Activated CD4-positive, alpha-beta T cell treated with anti-CD3 and anti-CD28 coated beads for 36 hours (primary cell): ENCODE measurements at regions of chr22 and their contacts with region 1.

Region 1: DNA sequence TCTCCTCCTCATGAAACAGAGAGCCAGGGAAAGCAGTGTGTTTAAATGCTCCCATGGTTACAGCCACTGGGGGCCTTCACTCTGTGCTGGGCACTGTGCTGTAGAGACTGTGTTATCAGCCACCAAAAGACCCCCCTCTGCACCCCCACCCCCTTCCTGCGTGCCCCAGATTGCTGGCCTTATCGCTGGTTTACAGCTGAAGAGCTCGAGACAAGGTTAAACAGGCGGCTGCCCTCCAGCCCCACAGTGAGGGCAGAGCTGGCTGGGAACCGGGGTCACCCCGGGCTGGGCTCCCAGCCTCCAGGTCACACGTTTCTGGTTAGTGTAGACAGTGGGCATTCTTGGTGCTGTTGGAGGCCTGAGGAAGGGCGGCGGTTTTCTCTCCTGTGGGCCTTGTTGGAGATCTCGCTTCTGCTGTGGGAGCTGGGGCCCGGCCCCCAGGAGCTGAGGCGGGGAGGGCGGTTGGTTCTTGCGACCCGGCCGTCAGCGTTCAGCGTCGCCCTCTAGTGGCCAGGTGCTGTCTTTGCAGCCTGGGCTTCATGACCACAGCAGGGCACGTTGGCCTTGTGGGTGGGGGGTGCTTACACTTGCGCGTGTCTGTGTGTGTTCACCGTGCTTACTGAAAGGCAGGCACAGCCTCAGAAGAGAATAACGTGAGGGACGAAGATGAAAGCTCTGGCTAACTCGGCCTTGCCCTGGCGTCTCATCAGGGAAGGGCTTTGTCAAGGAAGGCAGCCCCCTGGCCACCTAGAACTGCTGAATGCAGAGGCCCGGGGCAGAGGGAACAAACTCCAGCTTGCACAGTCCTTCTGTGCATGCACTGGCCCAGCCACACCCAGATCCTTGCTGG is 40.8 kb downstream of the TBC1D22A start:
- DNase-seq: peak; percentile 84
- ATAC-seq: peak; percentile 72
- H3K4me3 Mint-ChIP-seq: no peak overlapping the region
- H3K27ac Mint-ChIP-seq: no peak overlapping the region
- H3K4me1 Mint-ChIP-seq: peaks cover 32% of the 10 kb centered on the region
- H3K27me3 Mint-ChIP-seq: no peaks in the 10 kb centered on the region

Region 2: GRCh38 chr22:46563381-46564083 is 239.7 kb before region 1 on chr22:
- CTCF ChIA-PET with region 1: interaction called, 9 read pairs
- POLR2A ChIA-PET with region 1: no interaction called
- intact Hi-C with region 1: loop called (anchors 1 to 5 kb)
- DNase-seq: peak; percentile 90
- ATAC-seq: peak; percentile 87
- H3K4me3 Mint-ChIP-seq: peak overlapping the region; percentile 33
- H3K27ac Mint-ChIP-seq: peak overlapping the region; percentile 51
- H3K4me1 Mint-ChIP-seq: peaks cover 9% of the 10 kb centered on the region
- H3K27me3 Mint-ChIP-seq: no peaks in the 10 kb centered on the region

Region 3: DNA sequence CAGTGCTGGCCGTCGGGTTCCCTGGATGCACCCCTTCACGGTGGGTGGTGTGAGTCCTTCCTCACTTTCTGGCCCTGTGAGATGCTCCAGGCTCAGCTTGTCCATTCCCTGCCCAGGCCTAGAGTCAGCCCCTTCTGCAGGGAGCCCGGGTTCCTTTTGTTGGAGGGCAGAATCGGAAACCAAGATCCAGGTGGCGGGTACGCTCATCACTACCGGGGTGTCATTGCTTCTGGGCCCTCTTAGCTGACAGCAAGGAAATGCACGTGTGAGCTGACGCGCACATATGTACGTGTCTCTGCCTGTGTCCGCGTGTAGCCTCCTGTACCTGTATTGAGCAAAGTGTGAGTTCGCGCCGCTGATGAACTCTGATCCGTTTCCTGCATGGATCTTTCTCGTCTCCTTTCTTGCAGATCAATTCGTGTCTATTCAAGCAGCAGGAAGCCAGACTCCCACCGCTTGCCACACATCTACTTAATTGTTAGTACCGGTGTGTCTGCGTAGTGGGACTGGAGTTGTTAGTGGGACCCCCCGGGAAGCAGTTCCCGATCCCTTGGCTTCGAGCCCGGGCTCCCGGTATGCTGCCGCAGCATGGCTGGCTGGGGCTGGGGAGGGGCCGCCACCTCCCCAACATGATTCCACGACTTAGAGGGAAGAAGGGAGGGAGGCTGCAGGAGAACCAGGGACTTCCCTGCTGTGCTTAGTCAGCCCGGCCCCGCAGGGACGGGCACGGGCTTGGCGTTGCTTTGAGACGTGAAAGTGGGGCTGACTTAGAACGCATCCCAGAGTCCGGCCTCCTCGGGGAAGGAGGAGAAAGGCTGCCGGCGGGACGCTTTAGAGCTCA is 219.0 kb before region 1 on chr22:
- CTCF ChIA-PET with region 1: no interaction called
- POLR2A ChIA-PET with region 1: no interaction called
- intact Hi-C with region 1: no loop called
- DNase-seq: no peak
- ATAC-seq: no peak
- H3K4me3 Mint-ChIP-seq: no peak overlapping the region
- H3K27ac Mint-ChIP-seq: no peak overlapping the region
- H3K4me1 Mint-ChIP-seq: peaks cover 30% of the 10 kb centered on the region
- H3K27me3 Mint-ChIP-seq: no peaks in the 10 kb centered on the region

Region 4: DNA sequence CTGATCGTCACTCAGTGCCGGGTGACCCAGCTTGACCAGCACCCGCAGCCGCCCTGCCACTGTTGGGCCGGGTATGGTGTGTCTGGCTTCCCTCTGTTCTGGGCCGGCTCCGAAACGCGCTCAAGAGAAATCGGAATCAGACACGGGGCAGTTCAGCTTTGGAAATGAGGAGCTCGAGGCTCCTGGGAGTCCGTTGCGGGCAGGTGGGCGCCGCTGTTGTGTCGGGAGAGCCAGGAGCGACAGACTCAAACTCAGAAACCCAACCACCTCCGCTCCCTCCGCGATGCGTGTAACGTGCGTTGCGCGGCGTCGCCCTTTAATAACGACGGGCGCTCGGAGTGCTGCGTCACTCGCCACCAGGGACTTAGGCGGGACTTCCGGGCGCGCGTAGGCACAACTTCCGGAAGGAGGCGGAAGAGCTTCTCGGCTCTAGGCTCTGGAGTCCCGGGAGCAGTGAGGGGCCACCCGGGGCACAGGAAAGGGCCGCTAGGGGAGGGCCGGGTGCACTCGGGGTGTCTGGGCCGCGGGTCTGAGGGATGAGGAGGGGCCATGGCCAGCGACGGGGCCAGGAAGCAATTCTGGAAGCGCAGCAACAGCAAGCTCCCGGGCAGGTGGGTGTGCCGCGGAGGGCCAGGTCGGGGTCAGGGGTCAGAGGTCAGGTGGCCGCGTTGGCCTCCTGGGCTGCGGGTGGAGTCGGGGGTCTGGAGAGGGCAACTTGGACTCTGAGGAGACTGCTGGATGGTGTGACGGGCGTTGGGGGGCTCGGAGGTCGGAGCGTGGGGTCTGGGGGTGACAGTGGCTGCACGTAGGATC is 40.8 kb before region 1 on chr22 and contains the start of gene TBC1D22A:
- CTCF ChIA-PET with region 1: interaction called, 95 read pairs
- POLR2A ChIA-PET with region 1: interaction called, 4 read pairs
- intact Hi-C with region 1: loop called (anchors 1 to 2 kb)
- DNase-seq: peak; percentile 97
- ATAC-seq: peak; percentile 90
- H3K4me3 Mint-ChIP-seq: peak within 1 kb of the TSS; percentile 94
- H3K27ac Mint-ChIP-seq: peak within 1 kb of the TSS; percentile 99
- H3K4me1 Mint-ChIP-seq: peaks cover 58% of the 10 kb centered on the region
- H3K27me3 Mint-ChIP-seq: no peaks in the 10 kb centered on the region
- total RNA-seq, gene TBC1D22A: 36.0 to 38.0 TPM

Region 5: GRCh38 chr22:46774253-46774979 is 28.8 kb before region 1 on chr22:
- CTCF ChIA-PET with region 1: interaction called, 10 read pairs
- POLR2A ChIA-PET with region 1: no interaction called
- intact Hi-C with region 1: no loop called
- DNase-seq: peak; percentile 62
- ATAC-seq: peak; percentile 17
- H3K4me3 Mint-ChIP-seq: peak overlapping the region; percentile 67
- H3K27ac Mint-ChIP-seq: peak overlapping the region; percentile 78
- H3K4me1 Mint-ChIP-seq: peaks cover 74% of the 10 kb centered on the region
- H3K27me3 Mint-ChIP-seq: no peaks in the 10 kb centered on the region

Region 6: DNA sequence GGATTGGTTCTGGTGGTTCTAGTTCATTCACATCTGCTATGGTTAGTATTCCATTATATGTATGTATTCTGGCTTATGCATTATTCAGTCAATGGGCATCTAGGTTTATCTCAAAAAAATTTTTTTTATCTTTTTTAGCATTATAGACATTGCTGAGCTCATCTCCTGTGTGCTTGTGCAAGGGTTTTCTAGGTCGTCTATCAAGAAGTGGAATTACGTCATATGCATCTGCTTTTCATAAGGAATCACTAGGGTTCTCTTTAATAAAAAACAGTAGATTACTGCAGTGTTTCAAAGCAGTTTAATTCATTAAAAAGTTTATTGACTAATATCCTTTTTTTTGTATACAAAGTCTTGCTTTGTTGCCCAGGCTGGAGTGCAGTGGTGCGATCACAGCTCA is 19.5 kb before region 1 on chr22:
- CTCF ChIA-PET with region 1: interaction called, 14 read pairs
- POLR2A ChIA-PET with region 1: no interaction called
- intact Hi-C with region 1: no loop called
- DNase-seq: no peak
- ATAC-seq: no peak
- H3K4me3 Mint-ChIP-seq: no peak overlapping the region
- H3K27ac Mint-ChIP-seq: no peak overlapping the region
- H3K4me1 Mint-ChIP-seq: peaks cover 20% of the 10 kb centered on the region
- H3K27me3 Mint-ChIP-seq: no peaks in the 10 kb centered on the region

Region 7: GRCh38 chr22:46791201-46791731 is 12.0 kb before region 1 on chr22:
- CTCF ChIA-PET with region 1: interaction called, 35 read pairs
- POLR2A ChIA-PET with region 1: no interaction called
- intact Hi-C with region 1: no loop called
- DNase-seq: peak; percentile 88
- ATAC-seq: peak; percentile 93
- H3K4me3 Mint-ChIP-seq: peak overlapping the region; percentile 73
- H3K27ac Mint-ChIP-seq: peak overlapping the region; percentile 96
- H3K4me1 Mint-ChIP-seq: peaks cover 51% of the 10 kb centered on the region
- H3K27me3 Mint-ChIP-seq: no peaks in the 10 kb centered on the region

Region 8: DNA sequence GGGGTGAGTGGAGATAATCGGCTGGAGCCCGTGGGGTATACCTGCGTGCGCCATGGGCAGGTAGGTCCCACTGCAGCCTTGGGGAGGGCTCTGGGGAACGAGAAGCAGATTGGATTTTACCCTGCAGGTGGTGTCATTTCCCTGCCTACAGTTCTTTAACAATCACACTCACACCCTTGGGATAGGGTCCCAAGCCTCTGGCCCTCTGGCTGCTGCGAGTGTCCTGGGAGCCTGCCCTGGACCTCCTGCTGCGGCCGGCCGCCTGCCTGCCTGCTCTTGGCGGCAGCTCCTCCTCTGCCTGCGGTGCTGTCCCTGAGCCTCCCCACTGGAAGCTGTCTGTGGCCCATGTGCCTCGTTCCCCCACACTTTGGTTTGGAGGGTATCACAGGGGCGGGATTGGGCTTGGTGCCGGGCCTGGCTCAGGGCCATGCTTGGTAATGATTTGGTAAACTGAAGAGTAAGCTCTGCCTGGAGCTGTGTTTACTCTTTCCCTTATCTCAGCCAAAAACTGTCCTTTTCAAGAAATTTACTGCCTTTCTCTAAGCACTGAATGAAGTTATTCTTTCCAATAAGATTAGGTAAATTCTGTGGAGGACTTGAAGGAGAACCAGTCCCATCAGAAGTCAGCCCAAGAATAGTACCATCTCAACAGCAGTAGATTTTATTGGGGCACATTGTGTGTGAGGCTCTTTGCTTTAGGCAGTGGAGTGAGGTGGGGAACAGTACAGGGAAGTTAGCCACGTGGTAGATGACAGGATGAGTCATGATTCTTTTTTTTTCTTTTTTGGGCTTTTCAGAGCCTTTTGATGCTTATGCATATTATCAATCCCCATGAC is 12.9 kb after region 1 on chr22:
- CTCF ChIA-PET with region 1: interaction called, 20 read pairs
- POLR2A ChIA-PET with region 1: no interaction called
- intact Hi-C with region 1: no loop called
- DNase-seq: no peak
- ATAC-seq: peak; percentile 78
- H3K4me3 Mint-ChIP-seq: no peak overlapping the region
- H3K27ac Mint-ChIP-seq: no peak overlapping the region
- H3K4me1 Mint-ChIP-seq: peaks cover 36% of the 10 kb centered on the region
- H3K27me3 Mint-ChIP-seq: no peaks in the 10 kb centered on the region